ENCODE measurements at regions of chr7 and their contacts with region 1.

Region 1: DNA sequence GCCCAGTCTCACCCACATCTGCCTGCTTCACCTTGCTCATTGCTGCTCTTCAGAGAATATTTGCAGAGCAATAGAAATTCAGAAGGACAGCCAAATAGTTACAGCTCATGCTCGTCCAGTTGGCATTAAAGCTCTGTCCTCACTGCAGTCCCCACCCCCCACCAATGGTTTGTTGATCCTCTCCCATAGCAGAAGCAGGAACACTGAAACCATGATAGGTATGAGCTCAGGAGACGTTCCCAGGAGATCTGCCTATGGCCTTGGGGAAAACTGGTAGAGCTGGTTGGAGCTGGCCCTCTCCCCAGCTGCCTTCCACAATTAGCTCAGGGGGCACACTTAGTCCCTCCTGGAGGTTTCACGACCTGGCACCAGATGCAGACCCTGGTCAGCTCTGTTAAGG is 68.6 kb upstream of the KMT2C start:
- DNase-seq: no peak
- ATAC-seq: no peak
- H3K4me3 ChIP-seq: no peak overlapping the region
- H3K27ac ChIP-seq: no peak overlapping the region
- H3K4me1 ChIP-seq: no peaks in the 10 kb centered on the region
- H3K27me3 ChIP-seq: no peaks in the 10 kb centered on the region
- CTCF ChIP-seq: no peak

Region 2: GRCh38 chr7:151795168-151795811 is 709.1 kb before region 1 on chr7:
- CTCF ChIA-PET with region 1: no interaction called
- POLR2A ChIA-PET with region 1: no interaction called
- in situ Hi-C with region 1: no loop called
- intact Hi-C with region 1: no loop called
- DNase-seq: no peak
- ATAC-seq: no peak
- H3K4me3 ChIP-seq: no peak overlapping the region
- H3K27ac ChIP-seq: no peak overlapping the region
- H3K4me1 ChIP-seq: peaks cover 6% of the 10 kb centered on the region
- H3K27me3 ChIP-seq: no peaks in the 10 kb centered on the region
- CTCF ChIP-seq: no peak

Region 3: DNA sequence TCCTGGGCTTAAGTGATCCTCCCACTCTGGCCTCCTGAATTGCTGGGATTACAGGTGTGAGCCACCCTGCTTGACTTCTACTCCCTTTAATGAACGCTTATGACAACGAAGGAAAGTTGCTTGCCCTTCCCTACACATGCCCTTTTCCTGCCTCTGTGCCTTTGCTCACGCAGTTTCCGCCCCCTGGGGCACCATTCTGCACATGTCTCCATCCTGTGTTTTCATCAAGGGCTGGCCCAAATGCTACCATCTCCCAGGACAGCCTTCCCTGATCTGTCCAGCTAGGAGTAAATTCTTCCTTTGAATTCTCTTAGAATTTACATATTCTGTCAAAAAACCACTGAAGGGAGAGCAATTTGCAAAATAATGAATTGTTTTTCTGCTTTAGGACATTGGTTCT is 18.6 kb before region 1 on chr7:
- CTCF ChIA-PET with region 1: no interaction called
- POLR2A ChIA-PET with region 1: interaction called, 11 read pairs
- in situ Hi-C with region 1: no loop called
- intact Hi-C with region 1: no loop called
- DNase-seq: no peak
- ATAC-seq: no peak
- H3K4me3 ChIP-seq: no peak overlapping the region
- H3K27ac ChIP-seq: no peak overlapping the region
- H3K4me1 ChIP-seq: no peaks in the 10 kb centered on the region
- H3K27me3 ChIP-seq: no peaks in the 10 kb centered on the region
- CTCF ChIP-seq: no peak

Region 4: DNA sequence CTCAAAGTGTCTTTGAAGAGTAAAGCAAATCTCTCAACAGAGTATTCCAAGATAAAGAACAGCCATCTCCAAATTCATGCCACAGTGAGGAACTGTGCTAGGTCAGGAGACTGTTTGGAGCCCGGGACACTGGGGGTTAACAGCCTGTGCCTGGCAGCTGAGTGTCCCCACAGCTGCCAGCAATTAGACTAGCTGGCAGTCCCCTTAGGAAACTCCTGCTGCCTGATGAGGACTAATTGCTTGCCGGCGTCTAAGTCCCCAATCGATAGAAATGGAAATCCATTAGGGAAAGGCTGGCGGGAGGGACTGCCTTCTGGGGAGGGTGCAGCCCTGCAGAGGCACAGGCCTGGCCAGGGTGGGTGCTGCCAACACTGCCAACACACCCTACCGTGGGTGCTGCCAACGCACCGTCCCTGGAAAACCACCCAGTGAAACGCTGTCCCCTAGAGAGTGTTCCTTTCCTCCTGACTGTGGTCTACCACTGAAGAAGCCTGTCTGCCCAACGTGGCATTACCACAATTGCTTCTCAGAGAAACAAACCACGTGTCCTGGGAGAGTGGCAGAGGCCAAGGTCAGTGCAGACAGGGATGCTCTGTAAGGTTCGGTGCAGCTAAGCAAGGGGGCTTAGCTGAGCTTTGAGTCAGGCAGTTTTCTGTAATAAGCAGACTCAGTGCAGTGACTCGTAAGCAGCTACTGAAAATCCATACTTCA is 110.8 kb after region 1 on chr7:
- CTCF ChIA-PET with region 1: no interaction called
- POLR2A ChIA-PET with region 1: interaction called, 19 read pairs
- in situ Hi-C with region 1: no loop called
- intact Hi-C with region 1: no loop called
- DNase-seq: no peak
- ATAC-seq: peak; percentile 42; the same call in 1 of the 2 replicates
- H3K4me3 ChIP-seq: no peak overlapping the region
- H3K27ac ChIP-seq: no peak overlapping the region
- H3K4me1 ChIP-seq: no peaks in the 10 kb centered on the region; the same call in 1 of the 2 replicates
- H3K27me3 ChIP-seq: no peaks in the 10 kb centered on the region
- CTCF ChIP-seq: no peak